ENCODE measurements at regions of chr13 and their contacts with region 1.

Region 1: GRCh38 chr13:97353927-97354675 is 79.9 kb upstream of the RAP2A start:
- DNase-seq: no peak
- H3K4me3 ChIP-seq: no peak overlapping the region
- H3K27ac ChIP-seq: peak overlapping the region in 1 of 2 donors; percentile 24
- H3K4me1 ChIP-seq: peaks cover 0 to 6% (median 0%) of the 10 kb centered on the region in 3 donors
- H3K27me3 ChIP-seq: no peaks in the 10 kb centered on the region
- CTCF ChIP-seq: no peak

Region 2: DNA sequence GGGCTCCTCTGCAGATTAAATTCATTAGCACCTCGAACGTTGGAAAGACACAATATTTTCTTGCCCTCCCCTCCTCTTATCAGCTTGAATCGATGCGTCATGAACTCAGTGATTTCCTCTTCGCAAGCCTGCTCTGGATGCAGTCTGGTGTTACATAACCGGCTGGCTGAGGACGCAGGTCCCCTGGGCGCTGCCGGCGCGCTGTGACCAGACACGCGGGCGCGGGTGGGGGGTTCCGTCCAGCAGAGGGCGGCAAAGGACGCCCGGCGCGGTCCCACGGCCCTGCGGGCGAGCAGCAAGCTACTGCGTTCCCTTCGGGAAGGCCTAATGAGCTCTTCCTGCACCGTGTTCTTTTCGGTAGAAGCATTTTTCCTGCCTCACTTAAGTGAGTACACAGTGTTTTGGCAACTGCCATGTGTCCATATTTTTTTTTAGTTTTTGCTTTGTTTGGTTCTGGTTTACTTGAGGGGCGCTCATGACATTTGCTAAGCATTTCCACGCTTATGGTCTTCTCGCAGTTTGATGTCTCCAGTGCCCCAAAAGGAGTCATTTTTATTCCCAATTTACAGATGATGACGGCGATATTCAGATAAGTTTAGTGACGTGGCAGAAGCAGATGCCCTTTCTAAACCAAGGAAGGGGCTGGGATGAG is 244.1 kb before region 1 on chr13:
- intact Hi-C with region 1: loop called (anchors 5 kb)
- DNase-seq: peak; percentile 87 to 97 (median 91)
- H3K4me3 ChIP-seq: peak overlapping the region; percentile 15 to 51 (median 50)
- H3K27ac ChIP-seq: no peak overlapping the region
- H3K4me1 ChIP-seq: peaks cover 0 to 9% (median 0%) of the 10 kb centered on the region in 3 donors
- H3K27me3 ChIP-seq: no peaks in the 10 kb centered on the region
- CTCF ChIP-seq: peak; percentile 95